ENCODE measurements at regions of chr12 and their contacts with region 1.

Region 1: DNA sequence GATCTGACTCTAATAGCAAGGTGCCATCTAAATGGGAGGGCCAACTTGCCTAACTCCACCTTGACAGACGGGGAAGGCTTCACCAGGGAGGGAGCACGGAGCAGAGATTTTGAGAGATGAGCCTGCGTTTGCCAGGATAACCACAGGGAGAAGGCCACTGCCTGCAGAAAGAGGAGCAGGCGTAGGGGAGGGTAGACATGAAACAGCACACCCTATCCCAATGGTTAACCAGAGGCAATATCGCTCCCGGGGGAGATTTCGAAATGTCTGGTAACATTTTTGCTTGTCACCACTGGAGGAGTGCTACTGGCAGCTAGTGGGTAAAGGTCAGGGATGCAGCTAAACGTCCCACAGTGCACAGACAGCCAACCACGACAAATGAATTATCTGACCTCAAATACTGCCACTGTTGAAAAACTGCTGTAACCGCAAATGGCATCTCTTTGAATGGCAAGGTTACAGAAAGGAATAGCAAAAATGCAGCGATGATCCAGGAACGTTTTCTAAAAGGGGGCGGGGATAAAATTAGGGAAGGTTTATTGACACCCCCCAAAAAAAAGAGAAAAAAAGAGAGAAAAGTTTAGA is 126.0 kb upstream of the ATF7IP start:
- DNase-seq: no peak
- ATAC-seq: peak; percentile 65
- H3K4me3 ChIP-seq: no peak overlapping the region
- H3K27ac ChIP-seq: no peak overlapping the region
- H3K4me1 ChIP-seq: no peaks in the 10 kb centered on the region
- H3K27me3 ChIP-seq: no peaks in the 10 kb centered on the region

Region 2: DNA sequence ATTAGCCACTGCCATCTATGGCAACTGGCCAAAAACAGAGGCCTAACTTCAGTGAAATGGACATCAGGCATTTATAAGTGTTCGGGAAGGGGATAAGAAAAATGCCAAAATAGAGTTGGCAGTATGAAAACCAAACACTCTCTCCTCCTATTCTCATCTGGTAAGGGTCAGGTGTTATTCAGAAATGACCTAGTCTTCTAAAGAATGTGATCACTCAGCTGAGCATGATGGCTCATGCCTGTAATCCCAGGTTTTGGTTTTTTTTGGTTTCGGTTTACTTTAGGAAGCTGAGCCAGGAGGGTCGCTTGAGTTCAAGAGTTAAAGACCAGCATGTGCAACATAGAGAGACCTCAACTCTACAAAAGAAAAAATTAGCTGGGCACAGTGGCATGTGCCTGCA is 428.4 kb before region 1 on chr12:
- intact Hi-C with region 1: no loop called
- DNase-seq: no peak
- ATAC-seq: no peak
- H3K4me3 ChIP-seq: no peak overlapping the region
- H3K27ac ChIP-seq: no peak overlapping the region
- H3K4me1 ChIP-seq: no peaks in the 10 kb centered on the region
- H3K27me3 ChIP-seq: no peaks in the 10 kb centered on the region

Region 3: GRCh38 chr12:14417715-14418114 is 178.3 kb after region 1 on chr12:
- intact Hi-C with region 1: loop called (anchors 5 kb)
- DNase-seq: peak; percentile 74 to 78
- ATAC-seq: peak; percentile 62
- H3K4me3 ChIP-seq: no peak overlapping the region
- H3K27ac ChIP-seq: no peak overlapping the region
- H3K4me1 ChIP-seq: peaks cover 2 to 6% of the 10 kb centered on the region in 2 donors
- H3K27me3 ChIP-seq: no peaks in the 10 kb centered on the region

Region 4: DNA sequence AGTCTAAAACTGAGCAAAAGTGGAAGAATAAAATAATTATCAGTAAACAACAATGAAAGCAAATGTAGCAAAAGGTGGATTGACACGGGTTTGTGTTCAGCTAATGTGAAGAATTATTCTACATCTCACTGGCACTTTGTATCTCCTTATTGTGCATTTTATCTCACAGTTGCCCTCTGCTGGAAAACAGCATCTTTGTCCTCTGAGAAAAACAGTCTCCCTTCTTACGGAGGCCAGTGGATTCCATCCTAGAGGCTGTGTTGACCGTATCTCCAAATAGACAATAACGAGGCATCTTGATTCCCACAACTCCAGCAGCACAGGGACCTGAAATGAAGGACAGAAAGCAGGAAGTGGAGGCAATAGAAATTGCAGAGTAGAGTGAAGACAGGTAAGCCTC is 379.5 kb after region 1 on chr12:
- intact Hi-C with region 1: loop called (anchors 5 kb)
- DNase-seq: no peak
- ATAC-seq: no peak
- H3K4me3 ChIP-seq: no peak overlapping the region
- H3K27ac ChIP-seq: no peak overlapping the region
- H3K4me1 ChIP-seq: no peaks in the 10 kb centered on the region
- H3K27me3 ChIP-seq: no peaks in the 10 kb centered on the region

Region 5: DNA sequence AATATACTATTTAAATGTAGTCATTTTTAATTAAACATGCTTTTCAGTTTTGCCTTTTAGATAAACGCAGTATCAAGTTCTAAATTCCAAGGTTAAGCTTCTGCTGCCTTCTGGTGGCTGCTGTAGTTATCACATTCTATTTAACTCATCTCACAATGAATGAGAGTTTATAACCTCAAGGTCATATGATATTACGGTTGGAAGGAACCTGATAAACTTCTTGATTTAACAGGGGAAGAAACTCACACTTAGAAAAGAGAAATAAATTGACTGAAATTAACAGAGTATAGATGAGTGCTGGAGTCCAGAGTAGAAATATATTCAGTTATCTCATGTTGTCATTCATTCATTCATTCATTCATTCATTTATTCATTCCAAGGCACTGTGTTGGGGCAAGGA is 425.1 kb after region 1 on chr12:
- intact Hi-C with region 1: loop called in 1 of 2 experiments (anchors 5 kb)
- DNase-seq: no peak
- ATAC-seq: no peak
- H3K4me3 ChIP-seq: no peak overlapping the region
- H3K27ac ChIP-seq: no peak overlapping the region
- H3K4me1 ChIP-seq: no peaks in the 10 kb centered on the region
- H3K27me3 ChIP-seq: no peaks in the 10 kb centered on the region